Mammary epithelial cell (primary cell): ENCODE measurements at regions of chr12 and their contacts with region 1.

Region 1: DNA sequence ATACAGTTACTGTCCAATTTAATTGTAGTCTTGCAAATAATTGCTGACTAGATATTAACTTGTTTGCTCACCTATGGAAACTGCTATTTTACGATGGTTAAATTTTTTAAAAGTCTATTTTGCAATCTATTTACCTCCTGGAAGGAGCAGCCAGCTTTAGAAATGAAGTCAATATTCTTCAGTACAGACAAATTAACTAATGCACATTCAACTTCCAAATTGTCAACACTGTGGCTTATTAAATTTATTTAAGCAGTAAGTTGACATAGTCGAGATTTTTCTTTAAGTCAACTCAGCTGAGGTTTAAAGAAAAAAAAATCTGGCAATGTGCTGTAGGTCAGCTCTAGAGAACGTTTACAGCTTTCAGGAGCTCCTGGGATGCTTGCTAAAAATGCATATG is 221.2 kb downstream of the SSPN start:
- DNase-seq: no peak
- H3K4me3 ChIP-seq: no peak overlapping the region
- H3K27ac ChIP-seq: no peak overlapping the region
- H3K4me1 ChIP-seq: no peaks in the 10 kb centered on the region
- H3K27me3 ChIP-seq: no peaks in the 10 kb centered on the region
- CTCF ChIP-seq: no peak

Region 2: GRCh38 chr12:26773313-26774104 is 357.0 kb after region 1 on chr12:
- CTCF ChIA-PET with region 1: no interaction called
- dilution Hi-C with region 1: no loop called
- in situ Hi-C with region 1: no loop called
- intact Hi-C with region 1: loop called (anchors 10 kb)
- DNase-seq: no peak
- H3K4me3 ChIP-seq: no peak overlapping the region
- H3K27ac ChIP-seq: no peak overlapping the region
- H3K4me1 ChIP-seq: no peaks in the 10 kb centered on the region
- H3K27me3 ChIP-seq: no peaks in the 10 kb centered on the region
- CTCF ChIP-seq: no peak

Region 3: DNA sequence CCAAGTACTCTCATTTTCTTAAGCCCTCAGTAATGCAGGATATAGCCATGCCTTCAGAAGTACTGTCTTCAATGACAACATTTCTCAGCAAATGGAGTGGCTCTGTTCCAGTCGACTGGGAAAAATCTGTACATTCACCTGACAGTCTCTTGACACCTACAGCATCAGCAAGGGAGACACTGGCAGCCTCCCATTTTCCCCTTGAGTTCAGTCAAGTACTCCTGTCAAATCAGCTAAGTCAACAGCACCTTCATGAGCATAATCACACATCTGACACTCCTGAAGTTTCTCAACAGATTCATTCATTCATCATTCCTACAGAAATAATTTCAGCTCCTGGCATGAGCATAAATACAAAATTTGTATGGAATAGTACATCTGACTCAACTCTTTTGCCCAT is 475.2 kb after region 1 on chr12:
- CTCF ChIA-PET with region 1: no interaction called
- dilution Hi-C with region 1: no loop called
- in situ Hi-C with region 1: no loop called
- intact Hi-C with region 1: no loop called
- DNase-seq: no peak
- H3K4me3 ChIP-seq: no peak overlapping the region
- H3K27ac ChIP-seq: no peak overlapping the region
- H3K4me1 ChIP-seq: no peaks in the 10 kb centered on the region
- H3K27me3 ChIP-seq: no peaks in the 10 kb centered on the region
- CTCF ChIP-seq: no peak